Endothelial cell of umbilical vein (primary cell): ENCODE measurements at regions of chr1 and their contacts with region 1.

Region 1: GRCh38 chr1:101357444-101357986 is 120.7 kb downstream of the S1PR1 start:
- DNase-seq: peak; percentile 88
- H3K4me3 ChIP-seq: no peak overlapping the region
- H3K27ac ChIP-seq: no peak overlapping the region
- H3K4me1 ChIP-seq: no peaks in the 10 kb centered on the region
- H3K27me3 ChIP-seq: no peaks in the 10 kb centered on the region
- CTCF ChIP-seq: peak; percentile 73 to 88
- POLR2A ChIP-seq: no peak

Region 2: DNA sequence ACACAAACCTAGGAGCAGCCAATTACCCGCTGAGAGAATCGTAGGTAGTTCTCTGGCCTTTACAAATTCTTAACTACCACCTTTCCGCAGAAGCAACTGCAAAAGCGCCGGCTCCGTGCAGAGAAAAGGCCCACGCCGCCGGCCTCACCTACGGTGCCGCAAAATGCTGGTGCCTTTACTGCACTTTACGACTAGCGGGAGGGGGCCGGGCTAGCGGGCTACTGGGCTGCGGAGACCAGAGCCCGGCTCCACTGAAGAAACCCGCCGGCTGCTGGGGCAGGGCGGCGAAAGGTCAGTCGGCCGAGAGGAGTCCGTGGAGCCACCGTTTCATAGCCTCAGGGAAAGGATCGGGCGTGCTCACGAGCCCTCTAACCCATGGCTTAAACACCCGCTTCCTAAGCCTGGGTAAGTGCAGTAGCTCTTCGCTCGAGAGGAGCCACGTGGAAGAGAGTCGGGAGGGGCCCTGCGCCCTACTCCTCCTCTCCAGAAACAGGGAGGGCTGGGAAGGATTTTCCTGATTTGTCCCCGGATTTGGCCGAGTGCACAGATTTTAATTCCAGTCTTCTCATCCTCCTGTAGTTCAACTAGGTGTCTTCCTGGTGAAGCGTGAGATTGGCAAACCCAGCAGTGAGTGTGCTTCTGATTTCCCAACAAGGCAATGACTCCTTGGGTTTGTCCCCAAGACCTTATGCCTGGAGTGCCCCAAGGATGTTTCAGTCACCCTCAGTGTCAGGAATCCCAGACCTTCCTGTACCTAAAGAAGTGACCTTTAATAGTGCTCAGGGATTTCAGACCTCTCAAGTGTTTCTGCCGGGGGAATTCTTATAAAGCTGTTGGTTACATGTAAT is 331.6 kb before region 1 on chr1 and contains the start of gene DPH5:
- CTCF ChIA-PET with region 1: no interaction called
- POLR2A ChIA-PET with region 1: no interaction called
- dilution Hi-C with region 1: no loop called
- intact Hi-C with region 1: loop called (anchors 5 kb)
- DNase-seq: peak; percentile 93
- H3K4me3 ChIP-seq: peak within 1 kb of the TSS; percentile 70 to 96 (median 76)
- H3K27ac ChIP-seq: peak within 1 kb of the TSS; percentile 75
- H3K4me1 ChIP-seq: peaks cover 22% of the 10 kb centered on the region
- H3K27me3 ChIP-seq: no peaks in the 10 kb centered on the region
- CTCF ChIP-seq: no peak
- POLR2A ChIP-seq: peak; percentile 93
- total RNA-seq, gene DPH5: 31.3 and 37.2 TPM in 2 replicates

Region 3: GRCh38 chr1:101317590-101317989 is 39.9 kb before region 1 on chr1:
- CTCF ChIA-PET with region 1: interaction called, 17 read pairs
- POLR2A ChIA-PET with region 1: no interaction called
- dilution Hi-C with region 1: no loop called
- intact Hi-C with region 1: no loop called
- DNase-seq: no peak
- H3K4me3 ChIP-seq: no peak overlapping the region
- H3K27ac ChIP-seq: no peak overlapping the region
- H3K4me1 ChIP-seq: no peaks in the 10 kb centered on the region
- H3K27me3 ChIP-seq: peaks cover 5 to 8% of the 10 kb centered on the region in 2 experiments
- CTCF ChIP-seq: no peak
- POLR2A ChIP-seq: no peak

Region 4: DNA sequence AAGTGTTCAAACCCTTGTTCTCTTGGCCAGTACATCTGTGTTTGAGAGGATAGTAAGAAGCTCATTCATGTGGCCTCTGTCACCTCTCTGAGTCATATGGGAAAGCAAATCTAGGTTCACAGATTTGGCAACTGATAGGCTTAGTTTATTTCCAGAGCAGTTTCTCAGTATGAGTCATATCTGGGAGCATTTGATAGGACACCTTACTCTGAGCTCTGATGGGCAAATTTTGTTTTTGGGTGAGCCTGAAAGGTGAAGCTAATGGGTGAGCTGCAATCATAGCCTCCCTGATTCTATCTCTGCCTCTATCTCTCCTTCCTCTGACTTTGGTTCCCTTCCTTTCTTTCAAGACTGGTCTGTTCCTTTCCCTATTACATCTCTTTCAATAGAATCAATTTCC is 13.7 kb after region 1 on chr1:
- CTCF ChIA-PET with region 1: interaction called, 23 read pairs
- POLR2A ChIA-PET with region 1: no interaction called
- dilution Hi-C with region 1: no loop called
- intact Hi-C with region 1: no loop called
- DNase-seq: peak; percentile 74
- H3K4me3 ChIP-seq: no peak overlapping the region
- H3K27ac ChIP-seq: no peak overlapping the region
- H3K4me1 ChIP-seq: peaks cover 20% of the 10 kb centered on the region
- H3K27me3 ChIP-seq: no peaks in the 10 kb centered on the region
- CTCF ChIP-seq: no peak
- POLR2A ChIP-seq: no peak

Region 5: DNA sequence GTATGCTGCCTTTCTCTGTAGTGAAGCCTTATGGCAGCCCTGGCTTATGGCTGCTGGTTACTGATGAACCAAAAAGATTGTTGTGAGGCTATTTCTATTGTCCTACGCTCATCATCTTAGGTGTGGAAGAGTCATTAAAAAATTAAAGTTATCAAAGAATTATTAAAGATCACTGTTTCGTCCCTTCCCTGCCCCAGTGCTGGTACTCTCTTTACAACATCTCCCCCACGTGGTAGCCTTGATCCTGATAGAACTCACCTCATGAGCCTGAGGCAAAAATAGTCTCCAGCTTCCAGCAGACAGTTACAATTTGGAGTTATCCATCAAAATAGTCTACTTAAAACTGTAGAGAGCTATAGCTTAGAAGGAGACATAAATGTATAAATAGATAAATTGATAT is 80.8 kb after region 1 on chr1:
- CTCF ChIA-PET with region 1: interaction called, 39 read pairs
- POLR2A ChIA-PET with region 1: no interaction called
- dilution Hi-C with region 1: no loop called
- intact Hi-C with region 1: loop called (anchors 1 kb)
- DNase-seq: peak; percentile 59
- H3K4me3 ChIP-seq: no peak overlapping the region
- H3K27ac ChIP-seq: no peak overlapping the region
- H3K4me1 ChIP-seq: no peaks in the 10 kb centered on the region
- H3K27me3 ChIP-seq: peaks cover 6 to 8% of the 10 kb centered on the region in 2 experiments
- CTCF ChIP-seq: peak; percentile 44 to 55
- POLR2A ChIP-seq: no peak